T-cell (primary cell): ENCODE measurements at regions of chrX and their contacts with region 1.

Region 1: DNA sequence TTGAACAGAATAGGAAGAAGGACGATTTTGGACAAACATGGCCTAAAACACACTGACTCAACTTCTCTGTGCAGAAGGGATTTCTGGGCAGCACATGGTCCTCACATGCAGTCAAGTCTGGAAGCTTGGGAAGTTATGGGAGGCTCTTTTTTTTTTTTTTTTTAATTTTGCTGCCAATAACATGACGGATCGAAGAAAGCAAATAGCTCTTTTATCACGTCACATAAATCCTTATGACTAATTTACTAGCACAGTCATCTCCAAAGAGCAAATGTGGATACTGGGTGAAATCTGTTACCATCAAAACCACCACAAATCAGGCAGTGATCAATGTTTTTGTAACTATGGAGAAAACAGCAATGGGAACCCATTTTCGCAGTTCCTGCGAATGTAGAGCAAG is 193.3 kb upstream of the FAM9B start:
- DNase-seq: no peak
- ATAC-seq: no peak
- H3K4me3 ChIP-seq: no peak overlapping the region
- H3K4me3 Mint-ChIP-seq: no peak overlapping the region
- H3K27ac ChIP-seq: no peak overlapping the region
- H3K27ac Mint-ChIP-seq: no peak overlapping the region
- H3K4me1 ChIP-seq: no peaks in the 10 kb centered on the region
- H3K4me1 Mint-ChIP-seq: peaks cover 5 to 7% (median 6%) of the 10 kb centered on the region in 3 donors
- H3K27me3 ChIP-seq: no peaks in the 10 kb centered on the region
- H3K27me3 Mint-ChIP-seq: no peaks in the 10 kb centered on the region

Region 2: DNA sequence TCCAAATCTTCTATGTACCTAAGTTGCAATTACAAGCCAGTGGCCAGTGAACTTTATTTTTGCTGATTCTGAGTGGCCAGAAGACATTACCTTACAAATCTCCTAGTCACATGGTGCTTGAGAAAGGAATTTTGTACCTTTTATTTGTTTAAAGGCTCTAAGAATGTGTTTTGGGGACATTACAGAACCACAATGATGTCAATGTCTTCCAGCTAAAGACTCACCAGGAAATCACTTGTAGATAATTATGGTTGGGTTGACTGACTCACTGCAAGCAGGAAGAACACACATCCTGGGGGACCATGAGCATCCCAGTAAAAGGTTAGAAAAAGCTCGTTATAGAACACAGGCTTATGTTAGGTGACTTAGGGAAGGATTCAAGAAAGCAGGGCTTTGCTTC is 74.0 kb before region 1 on chrX:
- CTCF ChIA-PET with region 1: no interaction called
- POLR2A ChIA-PET with region 1: interaction called in 1 of 2 experiments, 10 read pairs
- DNase-seq: no peak
- ATAC-seq: peak in 1 of 4 experiments; percentile 40
- H3K4me3 ChIP-seq: no peak overlapping the region
- H3K4me3 Mint-ChIP-seq: no peak overlapping the region
- H3K27ac ChIP-seq: no peak overlapping the region
- H3K27ac Mint-ChIP-seq: peak overlapping the region in 1 of 2 donors; percentile 24
- H3K4me1 ChIP-seq: no peaks in the 10 kb centered on the region
- H3K4me1 Mint-ChIP-seq: peaks cover 0 to 14% (median 10%) of the 10 kb centered on the region in 3 donors
- H3K27me3 ChIP-seq: no peaks in the 10 kb centered on the region
- H3K27me3 Mint-ChIP-seq: peaks cover 0 to 7% of the 10 kb centered on the region in 2 donors